Left cardiac atrium (tissue), 4 donors: ENCODE measurements at regions of chr7 and their contacts with region 1.

Region 1: DNA sequence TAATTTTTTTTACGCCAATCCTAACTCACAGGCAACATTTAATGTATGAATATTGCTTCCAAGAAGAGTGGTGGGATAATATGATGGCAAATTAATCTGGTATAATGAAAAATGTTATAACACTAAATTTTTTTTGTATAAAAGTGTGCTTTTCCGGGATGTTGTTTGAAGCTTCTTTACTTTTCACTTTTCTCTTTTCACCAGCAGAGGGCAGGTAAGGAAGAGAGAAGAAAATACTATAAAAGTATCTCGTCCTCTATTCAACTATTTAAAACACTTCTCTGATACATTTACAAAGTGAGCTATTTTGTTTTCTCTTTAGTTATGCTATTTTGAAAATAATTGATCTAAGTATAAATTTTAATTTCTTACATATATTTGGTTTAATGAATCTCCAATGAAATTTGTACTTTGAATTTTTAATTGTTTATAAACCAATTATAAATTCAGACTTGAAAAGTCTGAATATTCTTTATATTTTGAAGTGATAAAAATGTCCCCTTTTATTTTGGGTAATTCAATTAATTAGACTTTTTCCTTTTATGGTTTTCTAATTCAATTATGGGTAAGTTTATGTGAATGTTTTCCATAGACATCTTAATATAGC is 20.7 kb upstream of the CFTR start:
- DNase-seq: no peak
- ATAC-seq: no peak

Region 2: GRCh38 chr7:116724560-116725231 is 734.4 kb before region 1 on chr7:
- intact Hi-C with region 1: no loop called
- DNase-seq: no peak
- ATAC-seq: no peak

Region 3: DNA sequence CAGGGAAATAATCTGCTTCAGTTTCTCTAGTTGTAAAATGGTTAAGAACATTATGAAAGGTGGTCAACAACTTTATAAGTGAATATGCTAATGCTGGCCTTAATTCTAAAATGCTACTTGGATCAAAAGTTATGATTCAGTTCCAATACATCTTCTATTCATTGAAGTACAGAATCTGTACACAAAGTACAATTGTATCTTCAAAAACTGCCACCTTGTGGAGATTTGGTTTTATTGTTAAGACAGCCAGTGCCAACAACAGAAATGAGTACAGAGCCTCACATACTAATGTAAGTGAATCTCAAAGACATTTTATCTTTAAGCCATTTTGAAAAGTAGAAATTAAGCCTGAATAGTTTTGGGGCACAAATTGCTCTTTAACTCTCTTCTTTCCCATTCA is 214.8 kb after region 1 on chr7:
- intact Hi-C with region 1: loop called in 1 of 2 experiments (anchors 10 kb)
- DNase-seq: no peak
- ATAC-seq: peak in 1 of 2 donors; percentile 55

Region 4: DNA sequence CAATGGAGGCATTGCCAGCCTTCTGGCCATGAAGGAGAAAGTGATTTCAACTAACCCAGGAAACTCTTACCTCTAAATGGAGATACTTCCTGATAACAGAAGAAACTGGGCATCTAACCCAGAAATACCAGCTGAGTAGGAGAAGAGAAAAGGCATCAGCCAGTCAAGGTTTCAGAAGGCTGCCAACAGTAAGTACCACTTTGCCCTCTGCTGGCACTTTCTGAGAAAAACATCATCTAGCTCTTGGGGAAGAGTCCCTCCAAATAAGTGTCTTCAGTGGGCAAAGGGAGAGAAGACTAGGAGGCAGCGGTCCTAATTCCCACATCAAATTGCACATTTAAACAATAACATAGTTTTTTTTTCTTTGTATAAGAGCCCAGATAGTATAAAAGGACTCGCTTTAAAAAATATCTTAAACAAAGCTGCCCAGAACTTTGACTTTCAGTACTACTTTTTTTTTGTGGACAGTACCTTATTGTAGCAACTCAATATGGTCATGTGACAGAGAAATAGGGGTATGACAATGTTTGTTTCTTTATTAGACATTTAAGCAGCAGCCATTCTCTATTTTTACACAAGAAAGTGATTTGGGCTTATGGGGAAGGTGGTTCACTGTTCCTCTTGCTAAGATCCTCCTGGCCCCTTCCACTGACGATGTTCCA is 256.8 kb after region 1 on chr7:
- intact Hi-C with region 1: loop called in 1 of 2 experiments (anchors 5 kb)
- DNase-seq: no peak
- ATAC-seq: peak in 1 of 2 donors; percentile 79